GM18951 (cell line): ENCODE measurements at regions of chr21 and their contacts with region 1.

Region 1: DNA sequence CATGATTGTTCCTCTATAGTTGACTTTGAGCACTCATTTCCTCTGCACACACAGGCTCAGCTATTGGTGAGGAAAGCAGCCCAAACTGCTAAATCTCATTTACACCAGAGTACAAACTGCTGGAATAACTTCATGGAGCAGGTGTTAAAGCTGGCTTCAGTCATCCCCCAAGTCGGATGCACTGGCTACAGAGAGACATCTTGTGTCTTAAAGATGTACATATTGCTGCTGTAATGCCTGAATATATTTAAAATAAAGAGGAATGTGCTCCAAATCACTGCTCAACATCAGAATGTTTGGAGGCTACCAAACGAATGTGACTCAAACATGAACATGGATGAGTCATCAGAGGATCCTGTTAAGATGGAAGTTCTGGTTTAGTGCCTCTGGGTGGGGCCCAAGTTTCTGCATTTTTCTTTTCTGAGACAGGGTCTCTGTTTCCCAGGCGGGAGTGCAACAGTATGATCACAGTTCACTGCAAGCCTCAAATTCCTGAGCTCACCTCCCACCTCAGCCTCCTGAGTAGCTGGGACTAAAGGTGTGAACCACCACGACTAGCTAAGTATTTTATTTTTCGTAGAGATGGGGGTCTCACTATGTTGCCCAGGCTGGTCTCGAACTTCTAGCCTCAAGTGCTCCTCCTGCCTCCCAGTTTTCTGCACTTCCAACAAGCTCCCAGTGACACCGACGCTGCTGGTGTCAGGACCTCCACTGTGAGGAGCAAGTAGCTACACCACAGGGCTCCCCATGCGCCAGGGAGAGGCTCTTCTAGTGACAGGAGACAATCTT is 79.0 kb upstream of the KRTAP19-8 start:
- POLR2A ChIP-seq: no peak

Region 2: GRCh38 chr21:31180256-31181081 is 63.1 kb after region 1 on chr21:
- in situ Hi-C with region 1: loop called (anchors 5 kb)
- POLR2A ChIP-seq: no peak

Region 3: DNA sequence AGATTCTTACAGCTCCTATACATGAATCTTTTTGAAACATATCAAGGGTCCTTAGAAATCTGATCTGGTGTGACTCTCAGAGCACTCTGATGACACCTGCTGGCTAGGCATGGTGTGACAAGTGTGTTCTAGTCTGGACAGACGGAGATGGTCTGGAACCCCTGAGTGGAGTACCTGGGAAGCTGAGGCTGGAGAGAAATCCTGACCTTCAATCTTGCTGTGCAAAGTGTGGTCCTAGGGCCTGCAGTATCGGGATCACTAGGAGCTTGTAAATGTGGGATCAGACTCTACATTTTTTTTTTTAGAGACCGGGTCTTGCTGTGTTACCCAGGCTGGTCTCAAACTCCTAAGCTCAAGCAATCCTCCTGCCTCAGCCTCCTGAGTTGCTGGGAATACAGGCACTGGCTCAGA is 463.5 kb after region 1 on chr21:
- in situ Hi-C with region 1: loop called (anchors 10 kb)
- POLR2A ChIP-seq: no peak